Right ventricle myocardium superior (tissue), 1 donor: ENCODE measurements at regions of chr17 and their contacts with region 1.

Region 1: GRCh38 chr17:42322382-42323267 is 34.3 kb downstream of the STAT5A start:
- DNase-seq: peak; percentile 96
- ATAC-seq: peak; percentile 88

Region 2: DNA sequence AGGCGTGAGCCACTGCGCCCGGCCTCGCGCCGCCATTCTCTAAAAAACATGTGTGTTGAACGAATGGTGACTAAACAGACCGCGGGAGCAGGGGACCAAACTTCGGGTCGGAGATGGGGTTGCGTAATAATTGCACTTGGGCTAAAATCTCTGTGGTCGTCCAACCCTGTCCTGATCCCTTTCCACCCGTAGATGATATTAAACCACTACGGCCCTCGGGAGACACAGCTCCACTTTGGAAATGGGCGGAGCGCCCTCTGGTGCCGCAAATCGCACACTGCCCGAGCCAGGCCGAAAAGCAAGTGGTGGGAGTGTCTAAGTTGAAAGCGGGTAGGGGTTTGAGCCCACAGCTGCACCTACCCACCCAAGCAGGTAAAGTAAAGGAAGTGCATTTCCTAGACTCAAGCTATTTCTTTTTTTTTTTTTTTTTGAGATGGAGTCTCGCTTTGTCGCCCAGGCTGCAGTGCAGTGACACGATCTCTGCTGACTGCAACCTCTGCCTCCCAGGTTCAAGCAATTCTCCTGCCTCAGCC is 83.4 kb after region 1 on chr17:
- intact Hi-C with region 1: loop called (anchors 2 kb)
- DNase-seq: peak; percentile 93
- ATAC-seq: peak; percentile 76